OCI-LY7 (cell line): ENCODE measurements at regions of chr7 and their contacts with region 1.

Region 1: GRCh38 chr7:27921081-27921836 is 181.3 kb downstream of the TAX1BP1 start:
- DNase-seq: peak; percentile 84
- H3K4me3 ChIP-seq: peak overlapping the region; percentile 63
- H3K27ac ChIP-seq: peak overlapping the region; percentile 70
- H3K4me1 ChIP-seq: peaks cover 85% of the 10 kb centered on the region
- CTCF ChIP-seq: peak; percentile 93

Region 2: DNA sequence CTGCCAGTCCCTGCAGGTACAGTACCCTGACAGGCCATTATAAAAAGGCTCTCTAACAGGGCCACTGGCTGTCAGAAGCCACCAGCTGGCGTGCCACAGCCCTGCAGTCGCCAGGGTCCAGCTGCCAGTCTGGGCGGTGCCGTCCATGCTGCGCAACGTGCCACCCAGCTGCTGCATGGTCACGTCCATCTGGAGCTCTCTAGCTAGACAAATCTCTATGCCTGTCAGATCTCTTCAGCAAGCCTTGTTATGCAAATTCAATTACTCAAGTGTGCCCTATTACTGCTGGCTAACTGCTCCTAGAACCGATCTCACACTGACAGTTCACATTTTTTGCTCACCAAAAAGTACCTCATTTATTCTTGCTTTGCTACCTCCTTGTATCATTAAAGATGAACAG is 334.4 kb before region 1 on chr7:
- CTCF ChIA-PET with region 1: no interaction called
- POLR2A ChIA-PET with region 1: no interaction called
- intact Hi-C with region 1: loop called (anchors 5 kb)
- DNase-seq: peak; percentile 75
- H3K4me3 ChIP-seq: peak overlapping the region; percentile 30
- H3K27ac ChIP-seq: no peak overlapping the region
- H3K4me1 ChIP-seq: peaks cover 15% of the 10 kb centered on the region
- CTCF ChIP-seq: no peak

Region 3: GRCh38 chr7:27636326-27637006 is 284.8 kb before region 1 on chr7:
- CTCF ChIA-PET with region 1: no interaction called
- POLR2A ChIA-PET with region 1: no interaction called
- intact Hi-C with region 1: no loop called
- DNase-seq: no peak
- H3K4me3 ChIP-seq: no peak overlapping the region
- H3K27ac ChIP-seq: no peak overlapping the region
- H3K4me1 ChIP-seq: no peaks in the 10 kb centered on the region
- CTCF ChIP-seq: 0 out of 2 replicates have a peak, but pooled peaks have one; percentile 20

Region 4: DNA sequence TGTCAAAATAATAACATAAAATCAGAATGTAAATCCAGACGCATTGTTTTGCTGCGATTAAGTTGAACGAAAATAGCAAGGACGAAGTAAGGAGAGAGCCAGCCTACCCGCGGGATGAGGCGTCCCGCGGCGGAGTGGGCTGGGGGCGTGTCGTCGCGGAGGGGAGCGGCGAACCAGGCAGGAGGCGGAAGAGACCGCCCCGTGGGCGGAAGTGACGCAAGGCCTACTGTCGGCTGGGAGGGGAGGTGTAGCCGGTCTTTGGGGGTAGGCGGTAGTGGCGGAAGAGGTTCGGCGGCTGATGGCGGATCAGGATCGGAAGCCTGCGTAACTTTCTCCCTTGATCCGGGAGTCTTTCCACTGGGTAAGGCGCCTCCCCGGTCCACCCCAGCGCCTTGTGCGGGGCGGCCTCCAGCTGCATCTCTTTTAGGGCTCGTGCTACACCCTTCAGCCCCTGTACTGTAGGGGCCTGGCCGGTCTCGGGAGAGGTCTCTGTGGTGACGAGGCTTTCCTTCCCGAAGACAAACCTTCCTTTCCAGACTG is 181.3 kb before region 1 on chr7 and contains the start of gene TAX1BP1:
- CTCF ChIA-PET with region 1: no interaction called
- POLR2A ChIA-PET with region 1: no interaction called
- intact Hi-C with region 1: loop called (anchors 2 kb)
- DNase-seq: peak; percentile 94
- H3K4me3 ChIP-seq: peak within 1 kb of the TSS; percentile 87
- H3K27ac ChIP-seq: peak within 1 kb of the TSS; percentile 53
- H3K4me1 ChIP-seq: peaks cover 12% of the 10 kb centered on the region
- CTCF ChIP-seq: no peak
- total RNA-seq, gene TAX1BP1: 24.2 and 27.9 TPM in 2 replicates

Region 5: GRCh38 chr7:27901028-27901760 is 20.1 kb before region 1 on chr7:
- CTCF ChIA-PET with region 1: no interaction called
- POLR2A ChIA-PET with region 1: interaction called, 7 read pairs
- intact Hi-C with region 1: loop called (anchors 2 kb)
- DNase-seq: peak; percentile 68
- H3K4me3 ChIP-seq: peak overlapping the region; percentile 44
- H3K27ac ChIP-seq: peak overlapping the region; percentile 64
- H3K4me1 ChIP-seq: peaks cover 35% of the 10 kb centered on the region
- CTCF ChIP-seq: no peak; the same call in 1 of the 2 replicates

Region 6: GRCh38 chr7:28020302-28020940 is 99.2 kb after region 1 on chr7:
- CTCF ChIA-PET with region 1: no interaction called
- POLR2A ChIA-PET with region 1: interaction called, 3 read pairs
- intact Hi-C with region 1: loop called (anchors 1 kb)
- DNase-seq: peak; percentile 67
- H3K4me3 ChIP-seq: no peak overlapping the region
- H3K27ac ChIP-seq: no peak overlapping the region
- H3K4me1 ChIP-seq: no peaks in the 10 kb centered on the region
- CTCF ChIP-seq: peak; percentile 88